ENCODE measurements at regions of chr15 and their contacts with region 1.

Region 1: DNA sequence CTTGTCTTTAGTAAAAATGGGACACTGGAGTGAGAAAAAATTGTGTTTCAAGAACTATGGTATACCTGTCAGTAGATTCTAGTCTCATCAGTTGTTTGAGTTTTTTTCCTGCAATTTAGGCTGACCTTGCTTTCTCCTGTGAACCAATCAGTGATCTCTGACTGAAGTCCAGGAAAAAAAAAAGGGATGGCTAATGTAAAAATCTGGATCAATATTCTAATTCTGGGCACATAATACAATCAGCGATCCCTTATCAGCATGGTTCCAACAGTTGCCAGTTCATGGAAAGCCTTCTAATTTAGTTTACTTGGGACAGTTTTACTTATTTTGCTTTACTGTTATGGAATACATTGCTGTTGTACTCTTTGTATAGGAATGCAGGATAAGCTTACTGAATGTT is 17.0 kb downstream of the TRPM7 start:
- DNase-seq: no peak
- ATAC-seq: no peak
- H3K4me3 ChIP-seq: no peak overlapping the region
- H3K4me3 Mint-ChIP-seq: no peak overlapping the region
- H3K27ac ChIP-seq: no peak overlapping the region
- H3K27ac Mint-ChIP-seq: peak overlapping the region in 1 of 9 donors; percentile 21
- H3K4me1 ChIP-seq: no peaks in the 10 kb centered on the region
- H3K4me1 Mint-ChIP-seq: peaks cover 14 to 47% (median 37%) of the 10 kb centered on the region in 7 donors
- H3K27me3 ChIP-seq: no peaks in the 10 kb centered on the region
- H3K27me3 Mint-ChIP-seq: no peaks in the 10 kb centered on the region

Region 2: DNA sequence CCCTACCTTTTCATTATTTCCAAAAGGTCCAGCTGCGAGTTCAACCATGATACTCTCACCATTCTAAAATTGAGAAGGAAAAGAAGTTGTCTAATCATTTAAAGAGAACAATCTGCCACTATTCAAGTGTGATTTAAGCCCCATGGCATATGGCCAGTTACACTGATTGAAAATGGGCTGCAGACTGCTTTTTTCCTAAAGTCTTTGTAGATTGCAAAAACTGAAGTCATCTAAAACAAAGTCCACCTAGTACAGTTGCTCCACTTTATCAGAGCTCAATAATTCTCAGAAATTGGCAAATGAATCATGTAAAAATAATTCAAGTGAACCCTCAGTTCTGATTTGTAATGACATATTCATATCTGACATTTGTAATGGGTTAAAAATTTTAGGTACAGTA is 56.7 kb after region 1 on chr15:
- CTCF ChIA-PET with region 1: interaction called, 4 read pairs
- POLR2A ChIA-PET with region 1: no interaction called
- intact Hi-C with region 1: loop called in 1 of 2 experiments (anchors 10 kb)
- DNase-seq: no peak
- ATAC-seq: no peak
- H3K4me3 ChIP-seq: no peak overlapping the region
- H3K4me3 Mint-ChIP-seq: no peak overlapping the region
- H3K27ac ChIP-seq: no peak overlapping the region
- H3K27ac Mint-ChIP-seq: peak overlapping the region in 1 of 9 donors; percentile 42
- H3K4me1 ChIP-seq: no peaks in the 10 kb centered on the region
- H3K4me1 Mint-ChIP-seq: no peaks in the 10 kb centered on the region
- H3K27me3 ChIP-seq: no peaks in the 10 kb centered on the region
- H3K27me3 Mint-ChIP-seq: no peaks in the 10 kb centered on the region

Measured in naive thymus-derived CD4-positive, alpha-beta T cell (primary cell).